HepG2 (cell line): ENCODE measurements at regions of chr16 and their contacts with region 1.

Region 1: DNA sequence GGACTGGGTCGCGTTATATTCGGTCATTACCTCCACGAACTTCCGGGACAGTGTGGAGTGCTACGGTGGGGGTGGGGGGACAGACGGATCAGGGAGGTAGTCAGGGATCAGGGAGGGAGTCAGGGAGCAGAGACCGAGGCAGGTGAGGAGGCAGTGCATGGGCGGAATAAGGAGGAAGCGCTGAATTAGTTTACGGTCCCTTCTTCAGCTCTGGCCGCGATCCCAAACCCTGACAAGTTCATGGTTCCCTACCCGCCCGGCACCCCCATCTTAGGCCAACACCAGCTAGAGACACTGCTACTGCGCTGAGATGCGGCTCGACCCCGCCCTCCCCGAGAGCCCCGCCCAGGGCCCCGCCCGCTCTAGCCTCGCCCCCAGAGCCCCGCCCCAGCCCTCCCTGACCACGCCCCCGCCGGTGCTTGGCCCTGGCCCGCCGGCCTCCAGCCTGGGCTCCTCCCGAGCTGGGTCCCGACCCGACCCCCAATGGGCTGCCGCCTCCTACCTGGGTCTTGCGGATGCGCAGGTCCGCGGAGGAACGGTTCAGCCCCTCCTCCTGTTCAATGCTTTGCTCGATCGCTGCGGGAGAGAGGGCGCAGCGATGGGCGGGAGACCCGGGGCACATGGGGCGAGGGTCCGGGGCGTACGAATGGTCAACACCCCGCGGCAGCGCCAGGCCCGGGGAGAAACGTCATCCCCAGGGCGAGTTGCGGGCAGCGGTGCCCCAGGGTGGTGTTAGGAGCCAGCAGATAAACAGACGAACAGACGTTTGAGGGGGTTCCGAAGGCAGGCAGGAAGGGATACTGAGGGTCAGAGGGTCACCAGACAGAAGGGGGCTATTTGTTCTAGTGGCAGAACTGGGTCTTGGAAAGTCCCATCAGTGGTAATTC is 12.2 kb downstream of the HSD3B7 start:
- DNase-seq: peak; percentile 79
- ATAC-seq: peak; percentile 70
- H3K4me3 ChIP-seq: peak overlapping the region; percentile 84 to 89 (median 84)
- H3K27ac ChIP-seq: peak overlapping the region; percentile 93
- H3K4me1 ChIP-seq: peaks cover 87% of the 10 kb centered on the region
- H3K27me3 ChIP-seq: no peaks in the 10 kb centered on the region
- CTCF ChIP-seq: peak; percentile 43
- EP300 ChIP-seq: 0 out of 4 replicates have a peak, but pooled peaks of 1 of the 2 experiments have one; percentile 1
- POLR2A ChIP-seq: peak; percentile 83 to 87
- RAD21 ChIP-seq: 0 out of 2 replicates have a peak, but pooled peaks have one; percentile 48

Region 2: GRCh38 chr16:30710971-30711370 is 286.3 kb before region 1 on chr16:
- CTCF ChIA-PET with region 1: no interaction called
- POLR2A ChIA-PET with region 1: no interaction called
- in situ Hi-C with region 1: no loop called
- intact Hi-C with region 1: no loop called
- DNase-seq: no peak
- ATAC-seq: no peak
- H3K4me3 ChIP-seq: no peak overlapping the region
- H3K27ac ChIP-seq: no peak overlapping the region
- H3K4me1 ChIP-seq: no peaks in the 10 kb centered on the region
- H3K27me3 ChIP-seq: no peaks in the 10 kb centered on the region
- CTCF ChIP-seq: no peak
- EP300 ChIP-seq: no peak
- POLR2A ChIP-seq: no peak
- RAD21 ChIP-seq: no peak

Region 3: GRCh38 chr16:30740364-30741251 is 256.6 kb before region 1 on chr16:
- CTCF ChIA-PET with region 1: no interaction called
- POLR2A ChIA-PET with region 1: no interaction called
- in situ Hi-C with region 1: no loop called
- intact Hi-C with region 1: no loop called
- DNase-seq: no peak
- ATAC-seq: no peak
- H3K4me3 ChIP-seq: no peak overlapping the region
- H3K27ac ChIP-seq: peak overlapping the region; percentile 0
- H3K4me1 ChIP-seq: peaks cover 35% of the 10 kb centered on the region
- H3K27me3 ChIP-seq: no peaks in the 10 kb centered on the region
- CTCF ChIP-seq: no peak
- EP300 ChIP-seq: no peak
- POLR2A ChIP-seq: no peak
- RAD21 ChIP-seq: no peak

Region 4: GRCh38 chr16:30972872-30973271 is 24.4 kb before region 1 on chr16:
- CTCF ChIA-PET with region 1: no interaction called
- POLR2A ChIA-PET with region 1: no interaction called
- in situ Hi-C with region 1: no loop called
- intact Hi-C with region 1: no loop called
- DNase-seq: peak; percentile 38
- ATAC-seq: peak; percentile 64
- H3K4me3 ChIP-seq: no peak overlapping the region
- H3K27ac ChIP-seq: no peak overlapping the region
- H3K4me1 ChIP-seq: no peaks in the 10 kb centered on the region
- H3K27me3 ChIP-seq: no peaks in the 10 kb centered on the region
- CTCF ChIP-seq: no peak; the same call in 1 of the 2 replicates
- EP300 ChIP-seq: no peak
- POLR2A ChIP-seq: no peak
- RAD21 ChIP-seq: no peak

Region 5: DNA sequence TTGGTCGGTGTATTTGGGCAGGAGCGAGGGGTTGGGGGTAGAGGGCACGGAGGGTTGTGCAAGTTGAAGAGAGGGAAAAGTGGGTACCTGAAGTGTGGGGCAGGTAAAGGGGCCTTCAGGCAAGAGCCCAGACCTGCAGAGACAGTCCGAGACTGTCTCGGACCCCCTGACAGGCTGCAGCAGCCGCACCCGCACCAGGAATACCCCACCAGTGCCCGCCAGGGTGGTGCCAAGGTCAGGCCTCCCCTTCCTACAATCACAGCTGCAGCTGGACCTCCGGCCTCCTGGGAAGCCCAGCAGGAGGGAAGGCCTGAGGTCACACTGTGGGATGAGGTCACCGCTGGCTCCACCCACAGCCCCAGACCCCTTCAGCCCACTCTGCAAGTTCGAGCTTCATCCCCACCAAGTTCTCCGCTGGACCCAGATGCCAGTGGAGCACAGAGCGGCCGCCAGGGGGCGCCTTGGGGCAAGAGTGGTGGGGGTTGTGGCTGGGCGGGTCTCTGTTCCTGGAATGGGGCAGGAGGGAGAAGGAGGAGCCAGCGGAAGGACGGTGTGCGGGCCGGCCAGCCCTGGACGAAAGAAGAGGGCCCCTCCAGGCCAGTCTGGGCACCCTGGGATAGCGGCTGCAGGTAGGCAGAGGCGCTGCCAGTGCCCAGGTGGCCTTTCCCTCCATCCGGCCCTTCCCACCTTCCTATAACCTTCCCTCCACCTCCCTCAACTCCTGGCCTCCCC is 12.4 kb before region 1 on chr16 and contains the start of gene HSD3B7:
- CTCF ChIA-PET with region 1: interaction called, 3 read pairs
- POLR2A ChIA-PET with region 1: interaction called, 81 read pairs
- in situ Hi-C with region 1: no loop called
- intact Hi-C with region 1: loop called (anchors 1 kb)
- DNase-seq: peak; percentile 80
- ATAC-seq: peak; percentile 78
- H3K4me3 ChIP-seq: peak within 1 kb of the TSS; percentile 41 to 72 (median 54)
- H3K27ac ChIP-seq: peak within 1 kb of the TSS; percentile 49
- H3K4me1 ChIP-seq: peaks cover 16% of the 10 kb centered on the region
- H3K27me3 ChIP-seq: no peaks in the 10 kb centered on the region
- CTCF ChIP-seq: peak; percentile 95
- EP300 ChIP-seq: 0 out of 4 replicates have a peak, but pooled peaks of 1 of the 2 experiments have one; percentile 21
- POLR2A ChIP-seq: peak; percentile 47 to 58; a peak in 3 of 4 replicates
- RAD21 ChIP-seq: peak; percentile 90
- total RNA-seq, gene HSD3B7: 58.8 and 69.7 TPM in 2 replicates

Region 6: GRCh38 chr16:31032736-31033708 is 35.8 kb after region 1 on chr16 and contains the start of gene STX4:
- CTCF ChIA-PET with region 1: no interaction called
- POLR2A ChIA-PET with region 1: interaction called, 16 read pairs
- in situ Hi-C with region 1: no loop called
- intact Hi-C with region 1: loop called (anchors 1 kb)
- DNase-seq: peak; percentile 94
- ATAC-seq: peak; percentile 88
- H3K4me3 ChIP-seq: peak within 1 kb of the TSS; percentile 86 to 99 (median 94)
- H3K27ac ChIP-seq: peak within 1 kb of the TSS; percentile 82
- H3K4me1 ChIP-seq: peaks cover 39% of the 10 kb centered on the region
- H3K27me3 ChIP-seq: no peaks in the 10 kb centered on the region; a peak in 1 of 5 replicates
- CTCF ChIP-seq: peak; percentile 16; the same call in 1 of the 2 replicates
- EP300 ChIP-seq: no peak
- POLR2A ChIP-seq: peak; percentile 60 to 75; a peak in 2 of 4 replicates
- RAD21 ChIP-seq: no peak
- total RNA-seq, gene STX4: 29.2 and 31.3 TPM in 2 replicates

Region 7: GRCh38 chr16:31094424-31095120 is 97.3 kb after region 1 on chr16 and contains the start of gene VKORC1:
- CTCF ChIA-PET with region 1: no interaction called
- POLR2A ChIA-PET with region 1: interaction called, 12 read pairs
- in situ Hi-C with region 1: no loop called
- intact Hi-C with region 1: no loop called
- DNase-seq: peak; percentile 98
- ATAC-seq: peak; percentile 95
- H3K4me3 ChIP-seq: peak within 1 kb of the TSS; percentile 80 to 100 (median 82)
- H3K27ac ChIP-seq: peak within 1 kb of the TSS; percentile 84
- H3K4me1 ChIP-seq: peaks cover 27% of the 10 kb centered on the region
- H3K27me3 ChIP-seq: no peaks in the 10 kb centered on the region; a peak in 1 of 5 replicates
- CTCF ChIP-seq: peak; percentile 44
- EP300 ChIP-seq: peak in 1 of 2 experiments; percentile 44; a peak in 1 of 4 replicates
- POLR2A ChIP-seq: peak; percentile 84 to 90
- RAD21 ChIP-seq: peak; percentile 32; the same call in 1 of the 2 replicates
- total RNA-seq, gene VKORC1: 92.1 and 141 TPM in 2 replicates

Region 8: DNA sequence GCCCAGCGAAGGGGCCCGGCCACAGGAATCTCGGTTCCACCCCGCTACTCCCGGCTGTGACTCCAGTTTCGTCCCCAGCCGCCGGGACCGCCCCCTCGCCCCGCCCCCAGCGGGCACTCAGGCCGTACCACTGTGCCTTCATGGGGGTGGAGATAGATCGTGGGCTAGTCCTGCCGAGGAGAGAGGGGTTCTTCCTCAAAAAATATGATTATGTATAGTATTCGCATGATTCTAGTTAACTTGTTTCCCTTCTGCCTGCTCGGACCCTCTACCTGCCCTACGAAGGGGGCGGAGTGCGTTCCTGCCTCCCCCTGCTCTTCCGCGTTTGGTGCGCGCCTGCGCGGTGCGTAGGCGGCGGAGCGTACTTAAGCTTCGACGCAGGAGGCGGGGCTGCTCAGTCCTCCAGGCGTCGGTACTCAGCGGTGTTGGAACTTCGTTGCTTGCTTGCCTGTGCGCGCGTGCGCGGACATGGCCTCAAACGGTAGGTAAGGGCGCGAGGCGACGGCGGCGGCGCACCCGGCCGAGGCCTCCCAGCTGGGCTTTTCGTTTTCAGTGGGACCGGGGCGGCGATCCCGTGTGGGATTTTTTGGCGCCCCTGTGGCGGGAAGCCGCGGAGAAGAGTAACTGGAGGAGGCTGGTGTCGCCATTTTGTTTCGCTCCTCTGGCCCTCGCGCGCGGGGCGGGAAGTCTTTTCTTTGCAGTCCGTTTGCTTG is 182.7 kb after region 1 on chr16 and contains the start of gene FUS:
- CTCF ChIA-PET with region 1: no interaction called
- POLR2A ChIA-PET with region 1: interaction called, 17 read pairs
- in situ Hi-C with region 1: no loop called
- intact Hi-C with region 1: no loop called
- DNase-seq: peak; percentile 84
- ATAC-seq: peak; percentile 74
- H3K4me3 ChIP-seq: peak within 1 kb of the TSS; percentile 90 to 93 (median 93)
- H3K27ac ChIP-seq: peak within 1 kb of the TSS; percentile 94
- H3K4me1 ChIP-seq: peaks cover 50% of the 10 kb centered on the region
- H3K27me3 ChIP-seq: no peaks in the 10 kb centered on the region; a peak in 1 of 5 replicates
- CTCF ChIP-seq: peak; percentile 4
- EP300 ChIP-seq: peak in 1 of 2 experiments; percentile 28; a peak in 1 of 4 replicates
- POLR2A ChIP-seq: peak; percentile 99 to 100
- RAD21 ChIP-seq: 0 out of 2 replicates have a peak, but pooled peaks have one; percentile 27
- total RNA-seq, gene FUS: 64.8 and 68.1 TPM in 2 replicates

Region 9: GRCh38 chr16:31853300-31853699 is 856.1 kb after region 1 on chr16:
- CTCF ChIA-PET with region 1: no interaction called
- POLR2A ChIA-PET with region 1: no interaction called
- in situ Hi-C with region 1: no loop called
- intact Hi-C with region 1: no loop called
- DNase-seq: no peak
- ATAC-seq: no peak
- H3K4me3 ChIP-seq: no peak overlapping the region
- H3K27ac ChIP-seq: no peak overlapping the region
- H3K4me1 ChIP-seq: no peaks in the 10 kb centered on the region
- H3K27me3 ChIP-seq: no peaks in the 10 kb centered on the region
- CTCF ChIP-seq: no peak
- EP300 ChIP-seq: no peak
- POLR2A ChIP-seq: no peak
- RAD21 ChIP-seq: no peak